HEK293 (cell line): ENCODE measurements at regions of chr2 and their contacts with region 1.

Region 1: DNA sequence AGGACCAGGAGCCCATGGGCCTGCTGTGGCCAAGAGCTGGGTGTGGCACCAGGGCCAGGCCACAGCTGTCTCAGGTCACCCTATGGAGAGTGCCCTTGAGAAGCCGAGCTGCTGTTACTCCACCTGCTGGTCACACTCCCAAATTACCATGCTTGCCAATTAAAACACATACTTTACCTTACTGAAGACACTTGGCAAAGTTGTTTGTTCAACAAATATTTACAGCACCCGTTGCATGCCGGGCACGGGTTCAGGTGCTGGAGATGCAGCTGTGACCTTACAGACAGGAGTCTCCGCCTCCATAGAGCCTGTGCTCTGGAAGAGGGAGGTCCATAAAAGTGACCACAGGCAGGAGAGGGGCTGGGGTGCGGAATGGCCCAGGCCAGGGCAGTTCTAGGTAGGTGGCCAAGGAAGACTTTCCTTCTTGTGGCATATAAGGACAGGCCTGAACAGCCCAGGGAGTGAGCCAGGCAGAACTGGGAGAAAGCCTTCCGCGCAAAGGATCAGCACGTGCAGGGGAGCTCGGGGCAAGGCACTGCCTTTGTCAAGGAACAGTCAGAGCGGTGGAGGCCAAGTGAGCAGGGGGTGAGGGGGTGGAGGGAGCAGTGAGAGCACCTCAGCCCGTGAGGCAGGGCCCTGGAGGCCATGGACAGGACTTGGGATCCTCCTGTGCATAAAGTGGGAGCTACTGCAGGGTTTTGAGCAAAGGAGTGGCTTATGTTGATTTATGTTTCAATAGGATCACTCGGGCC is 23.6 kb upstream of the RBM44 start:
- H3K4me3 ChIP-seq: no peak overlapping the region
- H3K27ac ChIP-seq: no peak overlapping the region
- H3K4me1 ChIP-seq: no peaks in the 10 kb centered on the region
- CTCF ChIP-seq: peak; percentile 30; the same call in 1 of the 2 replicates

Region 2: GRCh38 chr2:237581751-237582746 is 192.9 kb before region 1 on chr2:
- CTCF ChIA-PET with region 1: interaction called, 11 read pairs
- POLR2A ChIA-PET with region 1: no interaction called
- H3K4me3 ChIP-seq: no peak overlapping the region
- H3K27ac ChIP-seq: no peak overlapping the region
- H3K4me1 ChIP-seq: no peaks in the 10 kb centered on the region
- CTCF ChIP-seq: peak; percentile 82

Region 3: DNA sequence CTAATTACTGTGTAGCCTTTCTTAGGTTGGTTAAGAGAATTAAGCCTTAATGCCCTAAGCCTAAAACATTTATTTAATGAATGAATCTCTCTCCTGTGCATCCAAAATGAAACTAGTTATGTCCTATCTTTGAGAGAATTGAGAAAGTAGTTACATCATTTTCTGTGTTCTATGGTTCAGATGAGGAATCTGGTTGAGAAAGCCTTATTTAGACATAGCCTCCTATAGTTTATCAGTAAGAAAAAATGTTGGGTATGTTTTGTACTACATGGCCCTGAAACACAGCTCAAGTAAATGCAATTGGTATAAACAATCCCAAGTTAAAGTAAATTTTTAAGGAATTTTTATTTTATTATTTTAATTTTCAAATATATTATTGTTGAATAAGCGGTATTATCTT is 58.6 kb after region 1 on chr2:
- CTCF ChIA-PET with region 1: no interaction called
- POLR2A ChIA-PET with region 1: no interaction called
- H3K4me3 ChIP-seq: no peak overlapping the region
- H3K27ac ChIP-seq: no peak overlapping the region
- H3K4me1 ChIP-seq: no peaks in the 10 kb centered on the region
- CTCF ChIP-seq: no peak